T-cell (primary cell): ENCODE measurements at regions of chr14 and their contacts with region 1.

Region 1: GRCh38 chr14:77067632-77068514 is 30.2 kb upstream of the CIPC start:
- DNase-seq: peak in 33 of 35 experiments; percentile 11 to 71 (median 39)
- ATAC-seq: peak; percentile 64 to 80 (median 77)
- H3K4me3 ChIP-seq: no peak overlapping the region
- H3K4me3 Mint-ChIP-seq: no peak overlapping the region
- H3K27ac ChIP-seq: no peak overlapping the region
- H3K27ac Mint-ChIP-seq: no peak overlapping the region
- H3K4me1 ChIP-seq: peaks cover 0 to 5% of the 10 kb centered on the region in 2 experiments
- H3K4me1 Mint-ChIP-seq: peaks cover 0 to 2% (median 2%) of the 10 kb centered on the region in 3 donors
- H3K27me3 ChIP-seq: peaks cover 0 to 21% of the 10 kb centered on the region in 2 experiments
- H3K27me3 Mint-ChIP-seq: peaks cover 4 to 13% of the 10 kb centered on the region in 2 donors

Region 2: GRCh38 chr14:76876076-76876475 is 191.8 kb before region 1 on chr14:
- CTCF ChIA-PET with region 1: interaction called, 38 to 99 read pairs
- POLR2A ChIA-PET with region 1: interaction called in 1 of 2 experiments, 3 read pairs
- DNase-seq: peak in 26 of 35 experiments; percentile 7 to 68 (median 30)
- ATAC-seq: peak; percentile 58 to 83 (median 69)
- H3K4me3 ChIP-seq: no peak overlapping the region
- H3K4me3 Mint-ChIP-seq: no peak overlapping the region
- H3K27ac ChIP-seq: no peak overlapping the region
- H3K27ac Mint-ChIP-seq: no peak overlapping the region
- H3K4me1 ChIP-seq: no peaks in the 10 kb centered on the region
- H3K4me1 Mint-ChIP-seq: peaks cover 0 to 2% (median 0%) of the 10 kb centered on the region in 3 donors
- H3K27me3 ChIP-seq: peaks cover 0 to 22% of the 10 kb centered on the region in 2 experiments
- H3K27me3 Mint-ChIP-seq: peaks cover 0 to 2% of the 10 kb centered on the region in 2 donors

Region 3: GRCh38 chr14:76904740-76905438 is 163.0 kb before region 1 on chr14:
- CTCF ChIA-PET with region 1: interaction called, 8 to 32 read pairs
- POLR2A ChIA-PET with region 1: no interaction called
- DNase-seq: peak; percentile 42 to 81 (median 67)
- ATAC-seq: peak; percentile 84 to 91 (median 87)
- H3K4me3 ChIP-seq: no peak overlapping the region
- H3K4me3 Mint-ChIP-seq: peak overlapping the region; percentile 3 to 68 (median 34)
- H3K27ac ChIP-seq: no peak overlapping the region
- H3K27ac Mint-ChIP-seq: peak overlapping the region; percentile 84 to 91
- H3K4me1 ChIP-seq: peaks cover 4 to 26% of the 10 kb centered on the region in 2 experiments
- H3K4me1 Mint-ChIP-seq: peaks cover 25 to 40% (median 28%) of the 10 kb centered on the region in 3 donors
- H3K27me3 ChIP-seq: peaks cover 0 to 4% of the 10 kb centered on the region in 2 experiments
- H3K27me3 Mint-ChIP-seq: no peaks in the 10 kb centered on the region

Region 4: DNA sequence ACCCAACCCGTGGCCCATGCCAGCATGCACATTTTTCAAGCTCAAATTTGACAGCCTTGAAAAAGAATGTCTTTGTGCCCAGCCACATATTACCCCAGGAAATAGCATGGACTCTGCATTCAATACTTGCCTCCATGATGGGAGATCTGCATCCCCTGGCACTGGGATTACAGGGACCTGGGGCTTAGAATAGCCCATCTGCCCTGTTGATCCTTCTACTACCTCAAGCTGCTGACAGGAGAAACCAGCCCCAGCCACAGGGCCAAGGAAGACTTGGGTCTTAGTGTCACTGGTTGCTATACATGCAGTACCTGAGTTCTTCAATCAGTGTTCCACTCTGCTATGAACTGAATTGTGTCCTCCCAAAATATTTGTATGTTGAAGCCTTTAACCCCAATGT is 156.4 kb before region 1 on chr14:
- CTCF ChIA-PET with region 1: interaction called, 18 to 32 read pairs
- POLR2A ChIA-PET with region 1: interaction called in 1 of 2 experiments, 6 read pairs
- DNase-seq: no peak
- ATAC-seq: no peak
- H3K4me3 ChIP-seq: no peak overlapping the region
- H3K4me3 Mint-ChIP-seq: no peak overlapping the region
- H3K27ac ChIP-seq: no peak overlapping the region
- H3K27ac Mint-ChIP-seq: no peak overlapping the region
- H3K4me1 ChIP-seq: peaks cover 4 to 28% of the 10 kb centered on the region in 2 experiments
- H3K4me1 Mint-ChIP-seq: peaks cover 19 to 30% (median 26%) of the 10 kb centered on the region in 3 donors
- H3K27me3 ChIP-seq: no peaks in the 10 kb centered on the region
- H3K27me3 Mint-ChIP-seq: no peaks in the 10 kb centered on the region

Region 5: GRCh38 chr14:77086017-77086736 is 18.3 kb after region 1 on chr14:
- CTCF ChIA-PET with region 1: interaction called, 8 to 18 read pairs
- POLR2A ChIA-PET with region 1: no interaction called
- DNase-seq: peak in 7 of 35 experiments; percentile 17 to 45 (median 22)
- ATAC-seq: peak in 3 of 4 experiments; percentile 48 to 98 (median 75)
- H3K4me3 ChIP-seq: no peak overlapping the region
- H3K4me3 Mint-ChIP-seq: no peak overlapping the region
- H3K27ac ChIP-seq: no peak overlapping the region
- H3K27ac Mint-ChIP-seq: no peak overlapping the region
- H3K4me1 ChIP-seq: peaks cover 0 to 14% of the 10 kb centered on the region in 2 experiments
- H3K4me1 Mint-ChIP-seq: peaks cover 4 to 11% (median 7%) of the 10 kb centered on the region in 3 donors
- H3K27me3 ChIP-seq: peaks cover 0 to 2% of the 10 kb centered on the region in 2 experiments
- H3K27me3 Mint-ChIP-seq: no peaks in the 10 kb centered on the region

Region 6: DNA sequence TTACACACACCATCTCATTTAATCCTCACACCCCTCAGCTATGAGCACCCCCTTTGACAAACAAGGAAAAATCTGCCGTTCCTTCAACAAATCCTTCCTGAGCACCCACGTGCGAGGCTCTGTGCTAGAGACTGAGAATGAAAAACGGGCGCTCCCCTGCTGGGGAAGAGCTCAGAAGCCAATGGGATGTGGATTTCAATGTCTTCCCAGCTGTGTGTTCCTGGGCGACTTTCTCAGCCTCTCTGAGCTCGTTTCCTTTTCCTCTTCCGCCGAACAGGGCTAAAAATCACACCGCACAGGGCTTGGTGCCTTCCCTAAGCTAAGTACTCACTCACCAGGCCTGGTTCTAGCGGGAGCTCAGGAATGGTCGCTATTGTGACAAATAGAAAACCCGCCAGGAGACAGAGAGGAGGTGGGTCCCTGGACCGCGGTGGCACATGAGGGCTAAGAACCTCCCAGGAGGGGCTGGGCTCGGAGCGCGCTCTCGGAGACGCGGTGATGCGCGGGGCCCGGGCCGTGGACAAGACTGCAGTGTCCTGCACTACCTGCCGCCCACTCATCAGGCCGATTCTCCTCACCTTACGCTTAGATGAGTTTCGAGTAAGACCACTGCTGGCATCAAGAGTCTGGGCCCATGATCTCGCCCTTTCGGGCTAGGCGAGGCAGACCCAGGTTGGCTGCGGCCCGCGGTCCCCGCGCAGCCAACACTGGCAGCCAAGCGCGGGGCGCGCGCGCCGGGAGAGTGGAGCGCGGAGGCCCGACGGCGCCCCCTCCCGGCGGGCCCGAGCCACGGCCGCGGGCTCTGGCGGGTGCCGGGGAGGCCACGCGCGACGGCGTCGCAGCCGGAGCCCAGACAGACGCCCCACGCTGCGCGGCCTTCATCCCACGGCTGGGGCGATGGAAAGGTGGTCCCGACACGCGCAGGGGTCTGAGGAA is 56.7 kb after region 1 on chr14:
- CTCF ChIA-PET with region 1: interaction called in 1 of 2 experiments, 15 read pairs
- POLR2A ChIA-PET with region 1: no interaction called
- DNase-seq: peak; percentile 25 to 85 (median 58)
- ATAC-seq: peak; percentile 82 to 87 (median 84)
- H3K4me3 ChIP-seq: peak overlapping the region; percentile 63 to 64
- H3K4me3 Mint-ChIP-seq: peak overlapping the region; percentile 79 to 83 (median 80)
- H3K27ac ChIP-seq: peak overlapping the region; percentile 52
- H3K27ac Mint-ChIP-seq: peak overlapping the region; percentile 61 to 97
- H3K4me1 ChIP-seq: peaks cover 12 to 59% of the 10 kb centered on the region in 2 experiments
- H3K4me1 Mint-ChIP-seq: peaks cover 40 to 55% (median 49%) of the 10 kb centered on the region in 3 donors
- H3K27me3 ChIP-seq: peaks cover 2 to 47% of the 10 kb centered on the region in 2 experiments
- H3K27me3 Mint-ChIP-seq: peaks cover 7 to 36% of the 10 kb centered on the region in 2 donors